Endothelial cell of umbilical vein (primary cell): ENCODE measurements at regions of chr20 and their contacts with region 1.

Region 1: GRCh38 chr20:20360464-20360863 is 7.4 kb upstream of the INSM1 start:
- DNase-seq: peak; percentile 69
- H3K4me3 ChIP-seq: no peak overlapping the region
- H3K27ac ChIP-seq: no peak overlapping the region
- H3K4me1 ChIP-seq: no peaks in the 10 kb centered on the region
- H3K27me3 ChIP-seq: peaks cover 43 to 54% of the 10 kb centered on the region in 2 experiments
- CTCF ChIP-seq: peak; percentile 69 to 85
- POLR2A ChIP-seq: no peak

Region 2: GRCh38 chr20:20410678-20411077 is 50.2 kb after region 1 on chr20:
- CTCF ChIA-PET with region 1: no interaction called
- POLR2A ChIA-PET with region 1: no interaction called
- dilution Hi-C with region 1: no loop called
- intact Hi-C with region 1: loop called (anchors 10 kb)
- DNase-seq: peak; percentile 71
- H3K4me3 ChIP-seq: no peak overlapping the region
- H3K27ac ChIP-seq: no peak overlapping the region
- H3K4me1 ChIP-seq: peaks cover 6% of the 10 kb centered on the region
- H3K27me3 ChIP-seq: no peaks in the 10 kb centered on the region
- CTCF ChIP-seq: no peak
- POLR2A ChIP-seq: no peak

Region 3: DNA sequence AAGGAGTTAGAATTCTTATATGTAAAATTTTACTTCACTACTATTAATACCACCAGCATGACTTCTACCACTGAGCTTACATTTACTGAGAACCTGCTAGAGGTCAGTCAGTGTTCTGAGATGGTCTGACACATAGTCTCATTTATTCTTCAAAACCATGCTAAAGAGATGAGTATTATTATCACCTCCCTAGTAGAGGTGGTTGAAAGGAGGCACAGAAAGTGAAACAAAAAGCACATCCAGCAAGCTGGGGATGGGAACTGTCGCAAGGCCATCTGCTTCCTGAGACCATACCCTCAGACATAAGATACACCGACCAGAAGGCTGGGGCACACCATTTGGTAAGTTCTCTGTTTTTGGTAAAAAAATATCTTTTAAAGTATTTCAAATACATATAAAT is 145.1 kb after region 1 on chr20:
- CTCF ChIA-PET with region 1: no interaction called
- POLR2A ChIA-PET with region 1: no interaction called
- dilution Hi-C with region 1: no loop called
- intact Hi-C with region 1: loop called (anchors 5 kb)
- DNase-seq: no peak
- H3K4me3 ChIP-seq: no peak overlapping the region
- H3K27ac ChIP-seq: no peak overlapping the region
- H3K4me1 ChIP-seq: no peaks in the 10 kb centered on the region
- H3K27me3 ChIP-seq: no peaks in the 10 kb centered on the region
- CTCF ChIP-seq: no peak
- POLR2A ChIP-seq: no peak

Region 4: DNA sequence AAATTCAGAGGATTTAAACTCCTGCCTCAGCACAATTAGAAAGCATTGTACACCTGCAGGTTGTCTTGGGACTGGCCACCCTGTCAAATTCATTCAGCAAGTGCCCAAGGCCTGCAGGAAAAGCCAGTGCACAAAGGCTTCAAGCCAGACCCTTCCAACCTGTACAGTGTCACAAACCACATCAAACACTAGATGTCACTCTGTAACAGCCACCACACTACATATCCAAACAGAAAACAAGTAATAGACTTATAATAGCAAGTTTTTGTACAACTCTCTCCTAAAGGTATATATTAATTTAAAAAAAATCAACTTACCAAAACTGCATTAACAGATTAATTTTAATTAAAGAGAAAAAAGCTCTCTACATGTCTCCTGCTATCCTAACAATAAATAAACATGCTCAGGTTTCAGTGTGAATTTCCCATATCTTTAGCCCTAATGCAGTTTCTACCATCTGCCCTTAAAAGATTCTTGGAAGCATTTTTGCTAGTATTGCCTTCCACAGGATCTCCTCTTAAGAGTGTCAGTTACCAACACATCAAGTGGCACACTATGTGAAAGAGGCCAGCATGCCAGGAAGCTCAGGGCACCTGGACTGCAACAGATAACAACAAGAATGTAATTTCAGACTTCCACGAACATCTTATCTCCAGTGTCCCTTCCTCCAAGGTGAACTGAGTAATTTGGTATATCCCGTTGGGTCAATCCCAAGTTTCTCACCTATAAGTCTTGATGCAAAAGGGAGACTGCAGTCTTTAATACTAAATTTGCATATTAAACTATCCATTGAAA is 304.5 kb after region 1 on chr20:
- CTCF ChIA-PET with region 1: no interaction called
- POLR2A ChIA-PET with region 1: no interaction called
- dilution Hi-C with region 1: no loop called
- intact Hi-C with region 1: no loop called
- DNase-seq: peak; percentile 77
- H3K4me3 ChIP-seq: no peak overlapping the region
- H3K27ac ChIP-seq: no peak overlapping the region
- H3K4me1 ChIP-seq: peaks cover 26% of the 10 kb centered on the region
- H3K27me3 ChIP-seq: no peaks in the 10 kb centered on the region
- CTCF ChIP-seq: peak; percentile 52 to 60
- POLR2A ChIP-seq: peak; percentile 27